ENCODE measurements at regions of chr17 and their contacts with region 1.

Region 1: GRCh38 chr17:58517734-58518609 is 3.5 kb upstream of the MTMR4 start:
- DNase-seq: peak; percentile 100
- ATAC-seq: peak; percentile 87
- H3K4me3 Mint-ChIP-seq: peak overlapping the region; percentile 96
- H3K27ac Mint-ChIP-seq: peak overlapping the region; percentile 95
- H3K4me1 Mint-ChIP-seq: peaks cover 32% of the 10 kb centered on the region
- H3K27me3 Mint-ChIP-seq: no peaks in the 10 kb centered on the region

Region 2: GRCh38 chr17:58006924-58007780 is 510.8 kb before region 1 on chr17 and contains the start of gene SRSF1:
- CTCF ChIA-PET with region 1: no interaction called
- POLR2A ChIA-PET with region 1: no interaction called
- intact Hi-C with region 1: loop called in 1 of 2 experiments (anchors 1 kb)
- DNase-seq: peak; percentile 99
- ATAC-seq: peak; percentile 90
- H3K4me3 Mint-ChIP-seq: peak within 1 kb of the TSS; percentile 100
- H3K27ac Mint-ChIP-seq: peak within 1 kb of the TSS; percentile 100
- H3K4me1 Mint-ChIP-seq: peaks cover 35% of the 10 kb centered on the region
- H3K27me3 Mint-ChIP-seq: no peaks in the 10 kb centered on the region
- total RNA-seq, gene SRSF1: 271 to 368 TPM

Region 3: GRCh38 chr17:58337600-58338453 is 180.1 kb before region 1 on chr17:
- CTCF ChIA-PET with region 1: interaction called, 3 read pairs
- POLR2A ChIA-PET with region 1: interaction called, 3 read pairs
- intact Hi-C with region 1: loop called (anchors 1 to 2 kb)
- DNase-seq: peak; percentile 97
- ATAC-seq: peak; percentile 57
- H3K4me3 Mint-ChIP-seq: peak overlapping the region; percentile 100
- H3K27ac Mint-ChIP-seq: peak overlapping the region; percentile 99
- H3K4me1 Mint-ChIP-seq: peaks cover 26% of the 10 kb centered on the region
- H3K27me3 Mint-ChIP-seq: no peaks in the 10 kb centered on the region

Region 4: DNA sequence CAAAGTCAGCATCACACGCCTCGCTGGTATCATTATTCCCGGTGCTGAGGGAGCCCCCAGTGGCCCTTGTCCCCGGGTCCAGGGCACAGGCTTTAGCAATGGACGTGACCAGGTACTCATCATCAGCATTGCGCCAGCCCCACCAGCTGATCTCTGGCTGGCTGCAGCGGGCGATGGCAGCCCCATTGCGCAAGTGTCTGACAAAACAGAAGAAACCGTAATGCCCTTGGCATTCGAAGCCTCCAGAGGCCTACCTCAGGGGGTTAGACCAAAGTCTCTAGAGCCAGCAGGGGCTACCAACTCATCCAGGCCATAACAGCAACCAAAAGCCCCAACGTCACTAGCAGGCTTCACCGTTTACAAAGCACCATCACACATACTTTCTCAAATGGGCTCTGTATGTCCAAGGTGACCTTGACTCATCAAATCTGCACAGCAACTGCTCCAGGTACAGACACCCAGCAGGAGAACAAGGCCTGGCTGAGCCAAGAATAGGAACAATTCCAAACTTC is 10.8 kb before region 1 on chr17:
- CTCF ChIA-PET with region 1: no interaction called
- POLR2A ChIA-PET with region 1: no interaction called
- intact Hi-C with region 1: no loop called
- DNase-seq: no peak
- ATAC-seq: no peak
- H3K4me3 Mint-ChIP-seq: no peak overlapping the region
- H3K27ac Mint-ChIP-seq: no peak overlapping the region
- H3K4me1 Mint-ChIP-seq: peaks cover 3% of the 10 kb centered on the region
- H3K27me3 Mint-ChIP-seq: no peaks in the 10 kb centered on the region

Region 5: GRCh38 chr17:58587702-58588254 is 69.8 kb after region 1 on chr17:
- CTCF ChIA-PET with region 1: interaction called, 4 read pairs
- POLR2A ChIA-PET with region 1: no interaction called
- intact Hi-C with region 1: loop called in 1 of 2 experiments (anchors 1 kb)
- DNase-seq: peak; percentile 79
- ATAC-seq: peak; percentile 97
- H3K4me3 Mint-ChIP-seq: no peak overlapping the region
- H3K27ac Mint-ChIP-seq: no peak overlapping the region
- H3K4me1 Mint-ChIP-seq: no peaks in the 10 kb centered on the region
- H3K27me3 Mint-ChIP-seq: no peaks in the 10 kb centered on the region

Region 6: DNA sequence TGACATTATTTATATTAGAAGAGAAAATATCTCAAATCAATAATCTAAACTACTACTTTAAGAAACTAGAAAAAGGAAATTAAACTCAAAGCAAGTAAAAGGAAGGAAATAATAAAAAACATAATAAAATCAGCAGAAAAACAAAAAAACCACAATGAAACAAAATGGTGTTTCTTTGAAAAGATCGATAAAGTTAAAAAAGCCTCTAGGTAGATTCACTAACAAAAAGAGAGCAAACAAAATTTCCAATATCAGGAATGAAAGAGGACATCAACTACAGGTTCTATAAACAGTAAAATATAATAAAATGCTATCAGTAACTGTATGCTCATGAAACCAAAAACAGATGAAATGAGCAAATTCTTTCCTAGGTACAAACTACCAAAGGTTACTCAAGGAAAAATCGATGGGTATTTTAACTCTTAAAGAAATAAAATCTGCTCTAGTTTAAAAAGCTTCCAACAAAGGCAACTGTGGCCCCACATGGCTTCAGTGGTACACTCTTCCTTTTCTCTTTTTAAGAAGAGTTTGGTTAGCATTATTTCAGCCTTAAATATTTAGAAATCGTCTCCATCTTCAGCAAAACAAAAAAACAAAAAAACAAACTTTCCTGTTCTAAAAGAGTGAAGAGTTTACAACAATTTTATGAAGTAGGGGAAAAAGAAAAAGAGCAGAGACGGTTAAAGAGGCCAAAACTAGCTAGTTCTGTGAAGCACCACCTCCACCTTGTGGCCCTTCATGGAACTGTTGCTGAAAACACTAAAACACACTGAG is 486.6 kb after region 1 on chr17:
- CTCF ChIA-PET with region 1: interaction called, 16 read pairs
- POLR2A ChIA-PET with region 1: no interaction called
- intact Hi-C with region 1: loop called (anchors 1 kb)
- DNase-seq: peak; percentile 81
- ATAC-seq: no peak
- H3K4me3 Mint-ChIP-seq: no peak overlapping the region
- H3K27ac Mint-ChIP-seq: peak overlapping the region; percentile 55
- H3K4me1 Mint-ChIP-seq: peaks cover 34% of the 10 kb centered on the region
- H3K27me3 Mint-ChIP-seq: no peaks in the 10 kb centered on the region

Region 7: DNA sequence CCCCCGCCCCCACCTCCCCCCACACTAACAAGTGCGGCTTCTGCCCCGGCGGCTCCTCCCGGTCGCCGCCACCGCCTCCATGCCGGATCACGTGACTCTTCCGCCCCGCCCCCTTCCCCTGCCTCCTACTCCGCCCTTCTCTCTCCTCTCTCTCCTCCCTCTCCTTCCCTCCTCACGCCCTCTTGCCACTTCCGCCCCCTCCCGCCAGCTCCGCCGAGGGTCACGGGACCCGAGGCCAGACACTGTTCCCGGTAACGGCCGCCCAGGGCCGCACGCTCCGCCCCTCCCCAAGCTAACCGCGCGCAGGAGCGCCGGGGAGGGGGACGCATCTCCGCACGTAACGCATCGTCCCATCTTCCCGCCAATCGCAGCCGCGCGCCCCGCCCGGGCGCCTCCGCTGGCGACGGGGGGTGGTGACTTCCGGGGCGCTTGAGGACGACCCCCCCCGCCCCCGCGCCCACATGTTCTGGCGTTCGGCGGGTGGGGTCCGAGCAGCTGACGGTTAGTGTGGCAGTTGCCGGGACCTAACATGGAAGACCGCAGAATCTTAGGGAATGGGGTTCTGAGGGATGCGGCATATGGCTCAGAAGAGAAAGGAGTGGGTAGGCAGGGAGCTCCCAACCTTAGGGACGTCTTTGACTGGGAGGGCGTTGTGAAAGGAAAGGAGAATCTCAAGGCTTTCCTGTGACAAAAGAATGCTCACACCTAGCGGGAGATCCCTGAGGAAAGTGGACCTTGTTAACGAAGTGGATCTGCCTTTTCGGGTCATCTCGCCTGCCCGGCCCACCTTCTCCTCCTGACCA is 1874.3 kb after region 1 on chr17 and contains the start of gene USP32:
- CTCF ChIA-PET with region 1: no interaction called
- POLR2A ChIA-PET with region 1: no interaction called
- intact Hi-C with region 1: loop called in 1 of 2 experiments (anchors 5 kb)
- DNase-seq: peak; percentile 99
- ATAC-seq: peak; percentile 93
- H3K4me3 Mint-ChIP-seq: peak within 1 kb of the TSS; percentile 77
- H3K27ac Mint-ChIP-seq: peak within 1 kb of the TSS; percentile 99
- H3K4me1 Mint-ChIP-seq: peaks cover 41% of the 10 kb centered on the region
- H3K27me3 Mint-ChIP-seq: no peaks in the 10 kb centered on the region
- total RNA-seq, gene USP32: 32.3 to 33.1 TPM